Calu3 (cell line): ENCODE measurements at regions of chr1 and their contacts with region 1.

Region 1: DNA sequence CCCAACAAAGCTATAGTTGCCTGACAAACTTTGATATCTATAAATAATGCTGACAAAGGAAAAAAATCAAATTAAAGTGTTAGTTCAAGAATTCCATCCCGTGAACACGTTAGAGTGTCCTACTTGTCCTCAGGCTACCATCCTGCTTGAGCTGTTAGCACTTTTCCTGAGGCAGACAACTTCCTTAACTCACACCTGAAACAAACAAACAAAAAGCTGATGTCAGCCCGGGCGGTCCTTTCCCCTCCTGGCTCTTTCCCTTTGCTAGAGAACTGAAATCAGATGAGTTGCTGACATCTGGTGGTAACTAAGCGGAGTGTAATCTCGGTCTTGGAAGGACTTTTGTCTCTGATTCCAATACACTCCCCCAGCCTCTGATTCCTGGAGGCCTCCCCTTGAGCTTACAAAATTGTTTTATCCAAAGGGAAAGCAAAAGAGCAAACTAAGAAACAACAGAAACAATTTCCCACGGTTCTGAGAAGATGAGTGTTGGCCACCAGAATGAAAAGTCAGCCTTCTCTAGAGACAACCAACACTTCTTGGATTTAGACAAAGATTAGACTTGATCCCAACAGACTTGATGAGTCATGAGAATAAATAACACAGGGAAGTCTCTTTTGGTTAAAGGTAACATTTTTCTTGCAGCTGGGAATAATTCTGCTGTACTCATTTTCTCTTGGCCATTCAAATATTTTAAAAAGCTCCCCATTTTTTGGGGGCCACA is 135.4 kb downstream of the PROX1 start:
- DNase-seq: peak; percentile 65
- H3K4me3 Mint-ChIP-seq: no peak overlapping the region
- H3K27ac Mint-ChIP-seq: no peak overlapping the region
- H3K4me1 Mint-ChIP-seq: peaks cover 12% of the 10 kb centered on the region
- H3K27me3 Mint-ChIP-seq: peaks cover 2% of the 10 kb centered on the region
- CTCF ChIP-seq: peak; percentile 42

Region 2: DNA sequence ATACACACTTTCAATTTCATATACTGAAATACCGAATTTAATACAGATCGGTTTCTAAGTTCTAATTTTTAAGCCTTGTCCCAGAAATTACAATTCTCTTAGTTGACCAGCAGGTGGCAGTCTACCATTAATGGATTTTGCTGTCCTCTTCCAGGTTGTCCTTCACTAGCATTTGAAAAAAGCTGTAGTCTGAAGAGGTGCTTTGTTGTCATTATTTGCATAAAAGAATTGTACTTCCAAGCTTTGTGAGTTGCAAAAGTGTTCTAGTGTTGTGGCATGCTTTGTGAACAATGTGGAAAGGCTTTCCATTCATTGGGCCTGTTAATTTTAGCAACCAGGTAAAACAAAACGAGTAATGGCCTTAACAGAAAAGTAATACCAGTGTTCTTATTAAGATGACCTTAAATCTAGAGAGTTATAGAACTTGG is 878.5 kb before region 1 on chr1:
- CTCF ChIA-PET with region 1: interaction called, 5 read pairs
- intact Hi-C with region 1: loop called (anchors 1 kb)
- DNase-seq: peak; percentile 64
- H3K4me3 Mint-ChIP-seq: no peak overlapping the region
- H3K27ac Mint-ChIP-seq: no peak overlapping the region
- H3K4me1 Mint-ChIP-seq: no peaks in the 10 kb centered on the region
- H3K27me3 Mint-ChIP-seq: no peaks in the 10 kb centered on the region
- CTCF ChIP-seq: peak; percentile 77

Region 3: GRCh38 chr1:213564215-213564659 is 559.0 kb before region 1 on chr1:
- CTCF ChIA-PET with region 1: no interaction called
- intact Hi-C with region 1: loop called (anchors 1 kb)
- DNase-seq: peak; percentile 24
- H3K4me3 Mint-ChIP-seq: no peak overlapping the region
- H3K27ac Mint-ChIP-seq: no peak overlapping the region
- H3K4me1 Mint-ChIP-seq: no peaks in the 10 kb centered on the region
- H3K27me3 Mint-ChIP-seq: no peaks in the 10 kb centered on the region
- CTCF ChIP-seq: peak; percentile 18

Region 4: GRCh38 chr1:213820362-213821149 is 302.7 kb before region 1 on chr1:
- CTCF ChIA-PET with region 1: no interaction called
- intact Hi-C with region 1: loop called (anchors 10 kb)
- DNase-seq: no peak
- H3K4me3 Mint-ChIP-seq: no peak overlapping the region
- H3K27ac Mint-ChIP-seq: no peak overlapping the region
- H3K4me1 Mint-ChIP-seq: no peaks in the 10 kb centered on the region
- H3K27me3 Mint-ChIP-seq: peaks cover 13% of the 10 kb centered on the region
- CTCF ChIP-seq: no peak

Region 5: GRCh38 chr1:214143006-214143992 is 20.1 kb after region 1 on chr1:
- CTCF ChIA-PET with region 1: no interaction called
- intact Hi-C with region 1: no loop called
- DNase-seq: no peak
- H3K4me3 Mint-ChIP-seq: no peak overlapping the region
- H3K27ac Mint-ChIP-seq: no peak overlapping the region
- H3K4me1 Mint-ChIP-seq: no peaks in the 10 kb centered on the region
- H3K27me3 Mint-ChIP-seq: peaks cover 28% of the 10 kb centered on the region
- CTCF ChIP-seq: no peak

Region 6: GRCh38 chr1:215001419-215002021 is 878.3 kb after region 1 on chr1:
- CTCF ChIA-PET with region 1: no interaction called
- intact Hi-C with region 1: no loop called
- DNase-seq: no peak
- H3K4me3 Mint-ChIP-seq: no peak overlapping the region
- H3K27ac Mint-ChIP-seq: no peak overlapping the region
- H3K4me1 Mint-ChIP-seq: peaks cover 22% of the 10 kb centered on the region
- H3K27me3 Mint-ChIP-seq: no peaks in the 10 kb centered on the region
- CTCF ChIP-seq: no peak